ENCODE measurements at regions of chr5 and their contacts with region 1.

Region 1: DNA sequence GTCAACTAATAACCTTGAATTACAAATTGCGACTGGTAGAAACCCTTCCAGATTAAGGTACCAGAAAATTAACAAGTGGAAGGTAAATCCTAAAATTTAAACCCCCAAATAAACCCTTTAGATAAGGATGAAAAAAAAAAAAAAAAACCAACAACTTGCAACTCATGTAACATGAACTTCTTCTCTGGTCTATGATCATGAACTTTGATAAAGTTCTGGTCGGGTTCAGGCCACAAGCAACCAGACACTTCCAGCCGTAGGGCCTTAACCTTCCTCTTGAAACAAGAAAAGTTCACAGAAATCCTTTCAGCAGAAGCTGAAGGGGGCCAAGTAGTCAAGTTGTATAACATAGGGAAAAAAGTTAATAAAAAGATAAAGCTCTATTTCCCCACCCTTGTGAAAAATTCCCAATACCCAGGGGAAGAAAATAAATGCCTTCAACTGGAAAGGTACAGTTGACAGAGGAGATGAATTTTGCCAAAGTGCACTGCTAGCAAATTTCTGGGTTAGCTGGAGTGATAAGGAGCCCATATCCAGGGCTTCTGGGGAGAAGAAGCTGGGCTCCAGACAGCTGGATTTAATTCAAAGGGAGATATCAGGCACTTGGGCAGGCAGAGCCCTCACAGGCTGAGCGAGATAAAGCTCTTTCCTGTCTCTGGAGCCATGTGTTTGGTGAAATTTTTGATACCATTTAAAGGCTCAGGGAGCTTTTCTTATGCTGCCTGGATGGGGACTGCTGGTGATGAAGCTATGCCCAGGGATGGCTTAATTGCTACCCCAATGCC is 234.2 kb upstream of the PANK3 start:
- DNase-seq: peak; percentile 73
- H3K4me3 ChIP-seq: no peak overlapping the region
- H3K27ac ChIP-seq: peak overlapping the region; percentile 19 to 99; a peak in 3 of 4 replicates
- H3K4me1 ChIP-seq: peaks cover 0 to 80% of the 10 kb centered on the region in 2 experiments; a peak in 2 of 4 replicates
- H3K27me3 ChIP-seq: no peaks in the 10 kb centered on the region
- CTCF ChIP-seq: no peak
- EP300 ChIP-seq: peak; percentile 43 to 99; a peak in 3 of 4 replicates
- RAD21 ChIP-seq: peak; percentile 17

Region 2: GRCh38 chr5:168422431-168422830 is 390.9 kb before region 1 on chr5:
- CTCF ChIA-PET with region 1: no interaction called
- POLR2A ChIA-PET with region 1: no interaction called
- DNase-seq: no peak
- H3K4me3 ChIP-seq: no peak overlapping the region
- H3K27ac ChIP-seq: no peak overlapping the region
- H3K4me1 ChIP-seq: peaks cover 0 to 12% of the 10 kb centered on the region in 2 experiments; a peak in 1 of 4 replicates
- H3K27me3 ChIP-seq: no peaks in the 10 kb centered on the region
- CTCF ChIP-seq: peak; percentile 35
- EP300 ChIP-seq: no peak
- RAD21 ChIP-seq: peak; percentile 26

Region 3: DNA sequence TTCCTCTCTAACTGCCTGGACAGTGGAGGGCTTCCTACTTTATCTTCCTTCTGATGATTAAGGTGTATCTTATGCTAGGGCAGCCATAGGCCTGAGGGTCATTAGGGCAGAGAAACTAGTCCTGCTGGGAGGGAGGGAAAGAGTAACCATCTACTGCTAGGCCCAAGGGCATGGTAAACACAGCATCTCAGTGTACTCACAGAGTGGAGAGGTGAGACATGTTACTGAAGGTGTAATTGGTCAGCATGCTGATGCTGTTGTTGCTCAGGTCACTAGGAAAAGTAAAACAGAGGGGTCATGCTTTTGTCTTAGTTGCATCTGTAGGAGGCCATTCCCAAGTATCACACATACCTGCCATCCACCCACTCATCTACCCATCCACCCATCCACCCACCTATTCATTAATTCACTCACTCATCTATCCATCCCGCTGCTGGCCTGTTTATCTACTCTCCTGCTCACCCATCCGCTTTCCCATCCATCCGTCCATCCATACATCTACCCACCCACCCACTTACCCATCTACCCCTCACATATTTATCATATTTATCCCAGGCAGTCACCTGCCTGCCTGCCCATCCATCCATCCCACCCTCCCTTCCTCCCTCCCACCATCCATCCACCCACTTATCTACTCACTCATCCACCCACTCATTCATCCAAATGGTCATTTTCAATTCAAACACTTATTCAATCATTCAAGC is 90.5 kb before region 1 on chr5:
- CTCF ChIA-PET with region 1: no interaction called
- POLR2A ChIA-PET with region 1: no interaction called
- DNase-seq: no peak
- H3K4me3 ChIP-seq: no peak overlapping the region
- H3K27ac ChIP-seq: no peak overlapping the region; a peak in 1 of 4 replicates
- H3K4me1 ChIP-seq: peaks cover 0 to 9% of the 10 kb centered on the region in 2 experiments; a peak in 1 of 4 replicates
- H3K27me3 ChIP-seq: no peaks in the 10 kb centered on the region
- CTCF ChIP-seq: no peak
- EP300 ChIP-seq: no peak
- RAD21 ChIP-seq: no peak

Region 4: DNA sequence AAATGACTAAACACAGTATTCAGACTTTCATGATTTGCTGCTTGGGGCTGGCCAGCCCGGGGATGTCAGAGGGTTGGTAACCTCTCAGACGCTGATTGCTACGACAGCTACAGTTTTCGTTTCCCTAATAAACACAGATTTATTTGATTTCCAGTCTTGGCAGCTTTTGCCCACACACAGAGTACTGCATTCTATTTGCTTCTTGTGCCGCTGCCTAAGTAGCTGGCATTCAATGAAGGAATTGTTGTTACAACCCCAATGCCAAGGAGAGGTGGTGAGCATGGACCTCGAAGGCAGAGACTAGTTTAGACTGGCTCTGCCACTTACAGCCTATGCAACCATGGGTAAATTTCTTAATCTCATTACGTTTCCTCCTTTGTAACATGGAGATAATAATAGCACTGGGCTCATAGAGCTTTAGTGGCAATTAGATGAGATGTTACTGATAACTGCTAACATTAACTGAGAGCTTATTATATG is 12.9 kb after region 1 on chr5:
- CTCF ChIA-PET with region 1: interaction called, 10 read pairs
- POLR2A ChIA-PET with region 1: interaction called, 13 read pairs
- DNase-seq: peak; percentile 41
- H3K4me3 ChIP-seq: no peak overlapping the region
- H3K27ac ChIP-seq: peak overlapping the region in 1 of 2 experiments; percentile 87; a peak in 2 of 4 replicates
- H3K4me1 ChIP-seq: peaks cover 0 to 95% of the 10 kb centered on the region in 2 experiments; a peak in 3 of 4 replicates
- H3K27me3 ChIP-seq: no peaks in the 10 kb centered on the region
- CTCF ChIP-seq: no peak
- EP300 ChIP-seq: peak in 1 of 2 experiments; percentile 81; a peak in 2 of 4 replicates
- RAD21 ChIP-seq: peak; percentile 24

Measured in SK-N-SH (cell line).